Mammary epithelial cell (primary cell): ENCODE measurements at regions of chr11 and their contacts with region 1.

Region 1: DNA sequence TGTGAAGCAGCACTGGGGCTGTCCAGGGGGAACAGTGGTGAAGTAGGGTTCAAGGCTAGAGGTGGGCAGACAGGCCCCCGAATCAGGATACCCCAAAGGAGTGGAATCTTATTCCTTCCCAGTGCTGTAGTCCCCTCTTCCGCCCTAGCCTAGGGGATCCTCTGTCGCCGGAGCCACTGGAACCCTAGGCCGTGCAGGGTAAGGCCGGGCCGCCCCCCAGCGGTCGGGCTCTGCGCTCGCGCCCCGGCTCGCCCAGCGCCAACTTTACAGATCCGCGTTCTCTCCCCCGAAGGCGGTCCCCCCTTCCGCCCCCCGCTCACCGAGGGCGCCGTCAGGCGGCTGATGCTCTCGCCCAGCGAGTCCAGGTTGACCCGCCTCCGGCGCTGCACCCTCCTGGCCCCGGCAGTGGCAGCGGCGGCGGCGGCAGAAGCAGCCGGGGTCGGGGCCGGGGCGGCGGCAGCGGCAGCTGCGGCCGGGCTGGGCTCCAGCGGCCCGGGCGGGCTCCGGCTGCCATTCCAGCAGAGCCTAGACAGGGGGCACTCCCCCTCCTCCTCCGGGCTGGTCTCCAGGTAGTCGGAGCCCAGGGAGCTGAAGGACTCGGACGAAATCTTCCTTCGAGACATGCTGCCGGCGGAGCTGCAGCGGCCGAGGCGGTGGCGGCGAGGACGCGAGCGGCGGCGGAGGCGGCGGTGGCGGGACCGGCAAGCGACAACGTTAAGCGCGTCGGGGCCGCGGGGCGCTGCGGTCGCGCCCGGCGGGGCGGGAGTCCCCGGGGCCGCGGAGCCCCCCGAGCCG is 646 bp downstream of the GUCY1A2 start:
- DNase-seq: no peak
- H3K4me3 ChIP-seq: peak overlapping the region in 2 of 3 experiments; percentile 30 to 39
- H3K27ac ChIP-seq: no peak overlapping the region
- H3K4me1 ChIP-seq: peaks cover 10% of the 10 kb centered on the region
- H3K27me3 ChIP-seq: peaks cover 35% of the 10 kb centered on the region
- CTCF ChIP-seq: peak; percentile 2 to 51

Region 2: GRCh38 chr11:106724293-106724892 is 293.2 kb before region 1 on chr11:
- CTCF ChIA-PET with region 1: no interaction called
- dilution Hi-C with region 1: no loop called
- in situ Hi-C with region 1: no loop called
- intact Hi-C with region 1: loop called (anchors 1 kb)
- DNase-seq: no peak
- H3K4me3 ChIP-seq: no peak overlapping the region
- H3K27ac ChIP-seq: no peak overlapping the region
- H3K4me1 ChIP-seq: no peaks in the 10 kb centered on the region
- H3K27me3 ChIP-seq: peaks cover 2% of the 10 kb centered on the region
- CTCF ChIP-seq: no peak

Region 3: GRCh38 chr11:108319541-108320145 is 1302.0 kb after region 1 on chr11:
- CTCF ChIA-PET with region 1: no interaction called
- dilution Hi-C with region 1: no loop called
- in situ Hi-C with region 1: no loop called
- intact Hi-C with region 1: no loop called
- DNase-seq: peak; percentile 60
- H3K4me3 ChIP-seq: no peak overlapping the region
- H3K27ac ChIP-seq: peak overlapping the region; percentile 35
- H3K4me1 ChIP-seq: peaks cover 5% of the 10 kb centered on the region
- H3K27me3 ChIP-seq: no peaks in the 10 kb centered on the region
- CTCF ChIP-seq: no peak